Ascending aorta (tissue), 2 donors: ENCODE measurements at regions of chr1 and their contacts with region 1.

Region 1: GRCh38 chr1:58883037-58883887 is 99.4 kb upstream of the JUN start:
- DNase-seq: peak; percentile 63 to 91
- H3K4me3 ChIP-seq: no peak overlapping the region
- H3K27ac ChIP-seq: peak overlapping the region; percentile 62 to 77
- H3K4me1 ChIP-seq: peaks cover 13 to 35% of the 10 kb centered on the region in 2 donors
- H3K27me3 ChIP-seq: no peaks in the 10 kb centered on the region
- CTCF ChIP-seq: no peak

Region 2: DNA sequence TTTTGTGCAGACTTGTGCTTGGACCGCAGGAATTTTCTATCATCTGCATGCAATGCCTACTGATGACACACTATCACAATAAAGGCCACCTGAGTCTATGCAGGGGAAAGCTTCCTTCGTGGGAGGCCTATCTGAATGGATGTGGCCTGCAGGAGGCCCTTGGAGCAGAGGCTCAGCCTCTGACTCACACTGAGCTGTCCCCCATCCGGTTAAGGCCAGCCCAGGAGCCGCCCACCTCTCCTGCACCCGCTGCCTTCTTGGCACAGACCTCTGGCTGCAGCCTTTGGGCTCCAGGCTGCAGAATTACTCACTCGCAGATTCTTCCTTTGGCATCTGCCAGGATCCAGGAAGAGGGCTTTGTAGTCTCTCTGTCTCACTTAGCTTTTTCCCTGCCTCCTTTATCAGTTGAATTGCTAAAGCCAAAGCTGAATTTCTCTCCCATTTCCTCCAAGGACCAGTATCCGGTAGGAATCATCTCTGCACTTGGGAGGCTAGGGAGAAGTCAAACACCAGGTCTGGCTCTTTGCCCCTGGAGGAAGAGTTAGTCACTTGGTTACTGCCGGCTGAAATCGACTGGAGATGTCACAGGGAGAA is 34.3 kb before region 1 on chr1:
- intact Hi-C with region 1: loop called (anchors 2 kb)
- DNase-seq: peak; percentile 18 to 87
- H3K4me3 ChIP-seq: peak overlapping the region in 1 of 2 donors; percentile 17
- H3K27ac ChIP-seq: peak overlapping the region; percentile 27 to 65
- H3K4me1 ChIP-seq: peaks cover 8 to 9% of the 10 kb centered on the region in 2 donors
- H3K27me3 ChIP-seq: no peaks in the 10 kb centered on the region
- CTCF ChIP-seq: peak in 2 of 3 experiments; percentile 8 to 26

Region 3: GRCh38 chr1:59432531-59433439 is 549.5 kb after region 1 on chr1:
- intact Hi-C with region 1: loop called (anchors 5 kb)
- DNase-seq: no peak
- H3K4me3 ChIP-seq: no peak overlapping the region
- H3K27ac ChIP-seq: peak overlapping the region; percentile 67 to 72
- H3K4me1 ChIP-seq: peaks cover 9 to 30% of the 10 kb centered on the region in 2 donors
- H3K27me3 ChIP-seq: no peaks in the 10 kb centered on the region
- CTCF ChIP-seq: no peak